SK-N-SH (cell line): ENCODE measurements at regions of chr20 and their contacts with region 1.

Region 1: GRCh38 chr20:34876162-34877001 is at the start of gene ACSS2:
- DNase-seq: peak; percentile 96
- H3K4me3 ChIP-seq: peak within 1 kb of the TSS; percentile 64 to 79
- H3K27ac ChIP-seq: peak within 1 kb of the TSS in 1 of 2 experiments; percentile 39; a peak in 1 of 4 replicates
- H3K4me1 ChIP-seq: peaks cover 0 to 22% of the 10 kb centered on the region in 2 experiments; a peak in 2 of 4 replicates
- H3K27me3 ChIP-seq: no peaks in the 10 kb centered on the region
- CTCF ChIP-seq: no peak
- EP300 ChIP-seq: no peak
- RAD21 ChIP-seq: no peak
- polyA plus RNA-seq, gene ACSS2: 25.5 and 31.4 TPM in 2 replicates

Region 2: GRCh38 chr20:34955232-34956040 is 79.1 kb after region 1 on chr20 and contains the starts of genes GSS and MYH7B:
- CTCF ChIA-PET with region 1: interaction called, 61 read pairs
- POLR2A ChIA-PET with region 1: interaction called, 8 read pairs
- DNase-seq: peak; percentile 96
- H3K4me3 ChIP-seq: peak within 1 kb of the TSS; percentile 67 to 70
- H3K27ac ChIP-seq: peak within 1 kb of the TSS; percentile 84 to 95
- H3K4me1 ChIP-seq: peaks cover 11 to 15% of the 10 kb centered on the region in 2 experiments; a peak in 3 of 4 replicates
- H3K27me3 ChIP-seq: no peaks in the 10 kb centered on the region
- CTCF ChIP-seq: peak; percentile 61
- EP300 ChIP-seq: no peak
- RAD21 ChIP-seq: peak; percentile 77
- polyA plus RNA-seq, gene GSS: 95.6 and 117 TPM in 2 replicates
- polyA plus RNA-seq, gene MYH7B: 0.32 and 0.41 TPM in 2 replicates

Region 3: DNA sequence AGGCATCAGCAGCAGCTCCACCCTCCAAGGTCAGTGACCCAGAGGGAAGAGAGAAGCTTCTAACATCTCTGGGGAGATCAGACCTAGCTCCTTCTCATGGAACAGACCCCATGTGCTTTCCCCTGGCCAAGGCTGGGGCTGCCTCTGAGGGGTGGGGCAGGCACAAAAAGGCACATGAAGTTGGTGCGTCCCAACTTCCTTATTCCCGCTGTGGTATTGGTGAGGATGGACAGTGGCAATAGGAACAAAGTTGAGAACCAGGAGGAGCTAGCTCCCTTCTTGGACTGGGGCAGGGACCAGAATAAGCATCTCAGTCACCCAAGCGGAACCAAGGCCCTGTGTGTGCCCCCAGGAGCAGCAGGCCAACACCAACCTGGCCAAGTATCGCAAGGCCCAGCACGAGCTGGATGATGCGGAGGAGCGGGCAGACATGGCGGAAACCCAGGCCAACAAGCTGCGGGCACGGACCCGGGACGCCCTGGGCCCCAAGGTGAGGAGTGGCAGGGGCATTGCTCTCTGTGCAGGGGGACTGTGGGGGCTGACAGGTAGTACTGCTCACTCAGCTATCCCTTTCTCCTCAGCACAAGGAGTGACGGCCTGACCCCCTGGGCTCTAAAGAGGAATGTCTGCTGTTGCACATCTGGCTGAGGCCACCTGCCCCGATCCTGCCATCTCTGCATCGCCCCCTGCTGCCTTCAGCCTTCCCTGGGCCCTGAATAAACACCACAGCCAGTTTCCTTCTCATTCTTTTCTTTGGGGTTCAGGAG is 125.4 kb after region 1 on chr20:
- CTCF ChIA-PET with region 1: interaction called, 33 read pairs
- POLR2A ChIA-PET with region 1: no interaction called
- DNase-seq: peak; percentile 55
- H3K4me3 ChIP-seq: no peak overlapping the region
- H3K27ac ChIP-seq: no peak overlapping the region
- H3K4me1 ChIP-seq: no peaks in the 10 kb centered on the region; a peak in 1 of 4 replicates
- H3K27me3 ChIP-seq: no peaks in the 10 kb centered on the region
- CTCF ChIP-seq: peak; percentile 40
- EP300 ChIP-seq: no peak
- RAD21 ChIP-seq: peak; percentile 48